ENCODE measurements at regions of chr1 and their contacts with region 1.

Region 1: GRCh38 chr1:192808518-192809306 is at the start of gene RGS2:
- DNase-seq: peak; percentile 79 to 95 (median 86)
- ATAC-seq: peak; percentile 87
- H3K4me3 ChIP-seq: peak within 1 kb of the TSS; percentile 65
- H3K4me3 Mint-ChIP-seq: peak within 1 kb of the TSS; percentile 99
- H3K27ac ChIP-seq: peak within 1 kb of the TSS; percentile 33 to 76
- H3K27ac Mint-ChIP-seq: peak within 1 kb of the TSS; percentile 96
- H3K4me1 ChIP-seq: peaks cover 13% of the 10 kb centered on the region
- H3K4me1 Mint-ChIP-seq: peaks cover 36% of the 10 kb centered on the region
- H3K27me3 ChIP-seq: no peaks in the 10 kb centered on the region
- H3K27me3 Mint-ChIP-seq: no peaks in the 10 kb centered on the region
- CTCF ChIP-seq: peak; percentile 23
- total RNA-seq, gene RGS2: 142 to 155 TPM

Region 2: DNA sequence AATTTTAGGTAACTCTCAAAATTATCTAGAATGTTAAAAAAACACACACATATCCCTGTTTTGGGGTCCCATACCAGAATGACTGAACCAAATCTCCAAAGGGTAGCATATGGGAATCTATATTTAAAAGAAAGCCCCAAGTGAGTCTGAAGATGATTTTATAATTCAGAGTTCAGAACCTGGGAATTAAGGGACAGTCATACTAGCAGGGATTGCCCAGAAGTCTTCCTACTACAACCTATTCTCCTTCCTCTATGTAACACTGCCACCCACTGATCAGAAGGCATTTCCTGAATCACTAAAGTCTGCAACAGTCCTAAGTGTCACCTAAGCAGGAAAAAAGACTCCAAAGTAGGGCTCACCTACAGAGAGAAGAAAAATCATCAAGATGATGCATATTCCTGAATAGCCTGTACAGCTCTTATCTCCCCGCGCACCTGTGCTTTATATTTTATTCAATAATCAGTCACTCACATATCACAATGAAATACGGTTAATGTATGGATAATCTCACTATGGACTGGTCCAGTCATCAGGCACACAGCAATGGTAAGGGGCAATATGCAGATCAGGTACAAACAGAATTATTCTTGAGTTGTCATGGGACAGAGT is 228.3 kb before region 1 on chr1:
- CTCF ChIA-PET with region 1: no interaction called
- POLR2A ChIA-PET with region 1: no interaction called
- intact Hi-C with region 1: loop called (anchors 2 to 10 kb)
- DNase-seq: peak in 4 of 14 experiments; percentile 36 to 72 (median 60)
- ATAC-seq: peak; percentile 30
- H3K4me3 ChIP-seq: no peak overlapping the region
- H3K4me3 Mint-ChIP-seq: no peak overlapping the region
- H3K27ac ChIP-seq: no peak overlapping the region
- H3K27ac Mint-ChIP-seq: peak overlapping the region; percentile 48
- H3K4me1 ChIP-seq: peaks cover 4% of the 10 kb centered on the region
- H3K4me1 Mint-ChIP-seq: peaks cover 46% of the 10 kb centered on the region
- H3K27me3 ChIP-seq: no peaks in the 10 kb centered on the region
- H3K27me3 Mint-ChIP-seq: no peaks in the 10 kb centered on the region
- CTCF ChIP-seq: peak; percentile 65

Region 3: DNA sequence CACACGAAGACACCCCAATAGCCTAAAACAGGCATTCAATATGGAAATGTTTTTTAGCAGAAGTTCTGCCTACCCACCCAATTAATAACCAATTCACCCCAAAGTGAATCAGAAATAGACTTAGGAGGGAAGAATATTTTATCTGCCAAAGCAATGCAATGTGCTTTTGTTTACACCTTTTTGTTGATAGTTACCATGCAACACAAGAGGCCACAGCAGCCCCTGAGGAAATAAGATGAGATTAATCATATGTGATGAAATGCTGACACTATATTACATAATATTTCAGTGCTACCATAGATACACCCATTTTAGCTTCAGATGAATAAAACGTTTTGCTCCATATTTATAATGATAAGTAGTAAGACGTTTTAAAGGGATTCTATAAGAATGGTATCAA is 60.8 kb before region 1 on chr1:
- CTCF ChIA-PET with region 1: no interaction called
- POLR2A ChIA-PET with region 1: no interaction called
- intact Hi-C with region 1: no loop called
- DNase-seq: no peak
- ATAC-seq: no peak
- H3K4me3 ChIP-seq: no peak overlapping the region
- H3K4me3 Mint-ChIP-seq: no peak overlapping the region
- H3K27ac ChIP-seq: no peak overlapping the region
- H3K27ac Mint-ChIP-seq: no peak overlapping the region
- H3K4me1 ChIP-seq: no peaks in the 10 kb centered on the region
- H3K4me1 Mint-ChIP-seq: no peaks in the 10 kb centered on the region
- H3K27me3 ChIP-seq: peaks cover 0 to 2% of the 10 kb centered on the region in 2 experiments
- H3K27me3 Mint-ChIP-seq: no peaks in the 10 kb centered on the region
- CTCF ChIP-seq: no peak

Region 4: DNA sequence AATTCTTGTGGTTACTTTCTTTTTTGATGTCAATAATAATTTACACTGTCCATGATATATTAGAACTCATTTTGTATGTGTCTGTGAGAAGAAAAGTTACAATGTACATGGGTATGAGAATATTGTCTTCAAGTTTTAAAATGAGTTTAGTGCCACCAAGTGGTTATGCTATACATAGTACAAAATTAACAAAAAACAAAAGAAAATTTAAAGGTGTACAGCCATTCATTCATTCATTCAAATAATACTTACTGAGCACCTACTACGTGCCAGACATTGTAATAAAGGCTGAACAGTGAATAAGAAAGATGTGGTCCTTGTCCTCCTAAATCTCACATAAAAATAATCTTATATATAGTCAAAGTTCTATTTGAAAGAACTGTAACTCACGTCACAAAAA is 222.7 kb after region 1 on chr1:
- CTCF ChIA-PET with region 1: no interaction called
- POLR2A ChIA-PET with region 1: no interaction called
- intact Hi-C with region 1: loop called in 1 of 2 experiments (anchors 1 kb)
- DNase-seq: peak in 1 of 14 experiments; percentile 10
- ATAC-seq: no peak
- H3K4me3 ChIP-seq: no peak overlapping the region
- H3K4me3 Mint-ChIP-seq: no peak overlapping the region
- H3K27ac ChIP-seq: no peak overlapping the region
- H3K27ac Mint-ChIP-seq: no peak overlapping the region
- H3K4me1 ChIP-seq: no peaks in the 10 kb centered on the region
- H3K4me1 Mint-ChIP-seq: peaks cover 39% of the 10 kb centered on the region
- H3K27me3 ChIP-seq: no peaks in the 10 kb centered on the region
- H3K27me3 Mint-ChIP-seq: no peaks in the 10 kb centered on the region
- CTCF ChIP-seq: peak; percentile 31

Region 5: GRCh38 chr1:193121616-193122593 is 313.2 kb after region 1 on chr1 and contains the start of gene CDC73:
- CTCF ChIA-PET with region 1: interaction called, 8 read pairs
- POLR2A ChIA-PET with region 1: interaction called, 41 read pairs
- intact Hi-C with region 1: loop called (anchors 1 to 5 kb)
- DNase-seq: peak; percentile 97 to 100 (median 99)
- ATAC-seq: peak; percentile 92
- H3K4me3 ChIP-seq: peak within 1 kb of the TSS; percentile 96
- H3K4me3 Mint-ChIP-seq: peak within 1 kb of the TSS; percentile 97
- H3K27ac ChIP-seq: peak within 1 kb of the TSS; percentile 91 to 94
- H3K27ac Mint-ChIP-seq: peak within 1 kb of the TSS; percentile 97
- H3K4me1 ChIP-seq: peaks cover 27% of the 10 kb centered on the region
- H3K4me1 Mint-ChIP-seq: peaks cover 54% of the 10 kb centered on the region
- H3K27me3 ChIP-seq: no peaks in the 10 kb centered on the region
- H3K27me3 Mint-ChIP-seq: no peaks in the 10 kb centered on the region
- CTCF ChIP-seq: peak; percentile 94
- total RNA-seq, gene CDC73: 65.4 to 66.5 TPM

Region 6: DNA sequence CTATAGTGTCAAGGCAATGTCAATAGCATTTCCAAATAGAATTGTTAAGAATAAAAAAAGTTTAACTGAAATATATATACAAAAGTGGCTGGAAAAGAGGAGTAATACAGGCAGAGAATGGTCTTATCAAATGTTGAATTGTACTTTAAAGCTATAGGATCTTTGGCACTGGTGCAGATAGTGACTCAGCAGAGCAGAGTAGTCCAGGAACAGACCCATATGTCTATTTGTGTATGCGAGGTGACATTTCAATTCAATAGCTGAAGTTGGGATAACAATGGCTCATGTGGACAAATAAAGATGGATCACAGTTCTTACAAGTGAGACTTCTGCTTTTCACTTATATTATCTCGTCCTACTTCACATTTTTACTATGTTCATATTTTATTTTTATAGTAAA is 920.7 kb after region 1 on chr1:
- CTCF ChIA-PET with region 1: no interaction called
- POLR2A ChIA-PET with region 1: no interaction called
- intact Hi-C with region 1: no loop called
- DNase-seq: no peak
- ATAC-seq: no peak
- H3K4me3 ChIP-seq: no peak overlapping the region
- H3K4me3 Mint-ChIP-seq: no peak overlapping the region
- H3K27ac ChIP-seq: no peak overlapping the region
- H3K27ac Mint-ChIP-seq: no peak overlapping the region
- H3K4me1 ChIP-seq: no peaks in the 10 kb centered on the region
- H3K4me1 Mint-ChIP-seq: no peaks in the 10 kb centered on the region
- H3K27me3 ChIP-seq: no peaks in the 10 kb centered on the region
- H3K27me3 Mint-ChIP-seq: no peaks in the 10 kb centered on the region
- CTCF ChIP-seq: no peak

Measured in CD4-positive, alpha-beta T cell (primary cell).